ENCODE measurements at regions of chr19 and their contacts with region 1.

Region 1: GRCh38 chr19:57362997-57363705 is at the starts of genes TRAPPC2B and ZNF547:
- DNase-seq: peak; percentile 99
- H3K4me3 ChIP-seq: peak within 1 kb of the TSS; percentile 72
- H3K27ac ChIP-seq: peak within 1 kb of the TSS; percentile 47
- H3K4me1 ChIP-seq: peaks cover 6% of the 10 kb centered on the region; the same call in 1 of the 2 replicates
- H3K27me3 ChIP-seq: no peaks in the 10 kb centered on the region
- CTCF ChIP-seq: no peak
- total RNA-seq, gene TRAPPC2B: 14.1 and 15.3 TPM in 2 replicates
- total RNA-seq, gene ZNF547: 3.1 and 6.0 TPM in 2 replicates

Region 2: DNA sequence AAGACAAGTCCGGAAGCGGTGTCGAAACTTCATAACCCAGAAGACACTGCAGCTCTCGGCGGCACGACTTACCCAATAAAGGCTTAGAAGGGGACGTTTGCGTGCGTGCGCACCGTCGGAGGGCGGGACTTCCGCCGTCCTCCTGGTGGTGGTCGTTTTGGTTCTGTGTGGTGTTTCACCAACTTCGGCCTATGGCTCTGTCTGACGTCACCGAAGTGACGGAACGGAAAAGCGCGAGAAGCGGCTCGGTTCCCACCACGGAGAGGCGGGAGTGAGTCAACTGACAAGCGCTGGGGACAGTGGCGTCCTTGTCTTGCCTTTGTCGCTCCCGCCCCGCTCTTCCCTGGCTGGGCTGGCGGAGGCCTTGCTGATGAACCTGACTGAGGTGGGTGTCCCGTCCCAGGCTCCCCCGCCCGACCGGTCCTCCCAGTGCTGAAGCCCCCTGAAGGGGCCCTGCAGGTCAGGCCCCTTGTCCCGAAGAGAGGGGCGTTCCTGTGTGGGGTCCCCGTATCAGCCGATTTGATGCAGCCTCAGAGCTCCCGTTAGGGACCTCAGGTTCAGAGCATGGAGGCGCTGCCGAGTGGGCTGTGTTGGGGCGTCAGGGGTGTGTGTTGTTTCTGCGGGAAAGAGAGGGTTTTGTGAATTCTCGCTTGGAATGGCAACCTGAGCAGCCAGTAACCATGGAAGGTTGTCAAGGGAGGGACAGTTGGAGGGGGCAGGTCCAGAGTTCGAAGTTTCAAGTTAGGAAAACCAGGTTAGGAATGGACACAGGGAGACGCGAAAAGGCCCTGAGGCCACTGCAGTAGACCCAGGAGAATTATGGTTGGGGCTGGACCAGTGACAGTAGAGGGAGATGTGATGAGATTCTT is 26.8 kb after region 1 on chr19 and contains the start of gene ZNF548:
- CTCF ChIA-PET with region 1: interaction called, 3 read pairs
- POLR2A ChIA-PET with region 1: no interaction called
- intact Hi-C with region 1: loop called (anchors 1 kb)
- DNase-seq: peak; percentile 95 to 97
- H3K4me3 ChIP-seq: peak within 1 kb of the TSS; percentile 66
- H3K27ac ChIP-seq: peak within 1 kb of the TSS; percentile 28
- H3K4me1 ChIP-seq: peaks cover 15% of the 10 kb centered on the region
- H3K27me3 ChIP-seq: no peaks in the 10 kb centered on the region
- CTCF ChIP-seq: no peak
- total RNA-seq, gene ZNF548: 18.0 and 18.2 TPM in 2 replicates

Region 3: DNA sequence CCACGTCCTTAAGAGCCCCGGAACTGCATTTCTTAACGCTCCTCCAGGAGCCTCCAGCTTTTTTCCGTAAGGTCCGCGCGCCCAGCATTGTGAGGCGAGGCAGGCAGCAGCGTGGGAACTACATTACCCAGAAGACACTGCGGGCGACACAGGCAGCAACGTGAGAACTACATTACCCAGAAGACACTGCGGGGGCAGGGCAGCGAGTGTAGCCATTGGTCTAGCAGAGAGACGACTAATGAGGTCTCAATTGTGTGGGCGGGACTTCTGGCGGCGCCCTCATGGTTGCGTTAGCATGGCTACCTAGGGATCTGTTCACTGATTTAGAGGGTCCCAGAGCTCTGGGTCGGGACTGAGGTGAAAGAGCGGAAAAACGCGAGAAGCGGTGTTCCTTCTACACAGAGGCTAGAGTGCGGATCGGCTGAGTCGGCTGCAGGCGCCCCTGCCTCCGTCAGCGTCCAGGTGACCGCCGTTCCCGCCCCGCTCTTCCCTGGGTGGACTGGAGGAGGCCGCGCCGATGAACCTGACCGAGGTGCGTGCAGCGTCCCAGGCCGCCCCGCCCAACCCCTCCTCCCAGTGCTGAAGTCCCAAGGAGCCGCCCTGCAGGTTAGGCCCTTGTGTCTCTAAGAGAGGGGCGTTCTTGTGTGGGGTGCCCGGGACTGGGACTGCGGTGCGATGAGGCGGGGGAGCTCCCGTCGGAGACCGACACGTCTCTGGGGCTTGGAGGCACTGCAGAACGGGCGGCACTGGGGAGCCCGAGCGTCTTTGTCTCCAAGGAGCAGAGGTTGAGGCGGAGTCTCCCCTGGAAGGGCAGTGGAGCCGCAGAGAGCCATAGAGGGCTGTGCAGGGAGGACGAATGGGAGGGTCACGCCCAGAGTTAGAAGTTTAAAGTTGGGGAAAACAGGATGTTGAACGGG is 72.2 kb after region 1 on chr19 and contains the start of gene ZNF749:
- CTCF ChIA-PET with region 1: no interaction called
- POLR2A ChIA-PET with region 1: no interaction called
- intact Hi-C with region 1: loop called (anchors 1 kb)
- DNase-seq: peak; percentile 97
- H3K4me3 ChIP-seq: peak within 1 kb of the TSS; percentile 81
- H3K27ac ChIP-seq: peak within 1 kb of the TSS; percentile 33
- H3K4me1 ChIP-seq: peaks cover 16% of the 10 kb centered on the region
- H3K27me3 ChIP-seq: no peaks in the 10 kb centered on the region
- CTCF ChIP-seq: no peak
- total RNA-seq, gene ZNF749: 17.9 and 19.4 TPM in 2 replicates

Region 4: GRCh38 chr19:58083021-58083420 is 719.9 kb after region 1 on chr19:
- CTCF ChIA-PET with region 1: interaction called, 13 read pairs
- POLR2A ChIA-PET with region 1: no interaction called
- intact Hi-C with region 1: no loop called
- DNase-seq: no peak
- H3K4me3 ChIP-seq: no peak overlapping the region
- H3K27ac ChIP-seq: no peak overlapping the region
- H3K4me1 ChIP-seq: no peaks in the 10 kb centered on the region
- H3K27me3 ChIP-seq: peaks cover 9% of the 10 kb centered on the region; the same call in 1 of the 2 replicates
- CTCF ChIP-seq: no peak

Measured in PC-9 (cell line).